ENCODE measurements at regions of chr7 and their contacts with region 1.

Region 1: GRCh38 chr7:91089382-91089963 is 174.8 kb upstream of the FZD1 start:
- DNase-seq: peak; percentile 40
- ATAC-seq: peak; percentile 67
- H3K4me3 ChIP-seq: peak overlapping the region; percentile 38; the same call in 1 of the 2 replicates
- H3K27ac ChIP-seq: no peak overlapping the region
- H3K4me1 ChIP-seq: no peaks in the 10 kb centered on the region
- H3K27me3 ChIP-seq: no peaks in the 10 kb centered on the region
- CTCF ChIP-seq: peak; percentile 88

Region 2: DNA sequence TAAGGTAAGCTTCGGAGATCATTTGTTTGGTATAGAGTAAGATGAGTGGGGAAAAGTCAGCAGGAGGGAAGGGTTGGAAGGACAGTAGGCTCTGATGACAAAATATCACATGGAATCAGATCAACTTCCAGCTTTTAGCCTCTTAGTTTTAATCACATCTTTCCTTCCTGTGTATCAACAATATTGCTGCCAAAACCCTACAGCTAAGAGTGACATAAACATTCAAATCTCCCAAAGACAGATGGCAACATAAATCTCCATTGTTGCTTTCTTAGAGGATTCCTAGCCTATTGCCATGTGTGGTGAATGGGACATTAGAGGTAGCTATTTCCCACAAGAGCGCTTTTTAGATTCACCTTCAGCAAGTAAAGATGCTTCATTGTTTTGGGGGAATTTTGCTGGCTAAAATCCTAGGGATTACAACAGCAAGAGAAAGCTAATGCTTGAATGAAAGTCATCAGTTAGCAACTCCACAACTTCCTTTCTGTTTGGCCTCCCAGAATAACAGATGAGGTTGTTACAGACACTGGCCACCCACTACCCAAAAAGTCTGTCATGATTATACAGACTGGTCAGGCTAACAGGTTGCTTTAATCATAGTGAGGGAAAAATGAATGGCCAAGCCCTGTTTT is 139.6 kb after region 1 on chr7:
- CTCF ChIA-PET with region 1: no interaction called
- POLR2A ChIA-PET with region 1: no interaction called
- intact Hi-C with region 1: loop called (anchors 5 kb)
- DNase-seq: peak; percentile 56
- ATAC-seq: peak; percentile 74
- H3K4me3 ChIP-seq: peak overlapping the region; percentile 29
- H3K27ac ChIP-seq: peak overlapping the region; percentile 84
- H3K4me1 ChIP-seq: peaks cover 21% of the 10 kb centered on the region
- H3K27me3 ChIP-seq: no peaks in the 10 kb centered on the region
- CTCF ChIP-seq: no peak

Region 3: DNA sequence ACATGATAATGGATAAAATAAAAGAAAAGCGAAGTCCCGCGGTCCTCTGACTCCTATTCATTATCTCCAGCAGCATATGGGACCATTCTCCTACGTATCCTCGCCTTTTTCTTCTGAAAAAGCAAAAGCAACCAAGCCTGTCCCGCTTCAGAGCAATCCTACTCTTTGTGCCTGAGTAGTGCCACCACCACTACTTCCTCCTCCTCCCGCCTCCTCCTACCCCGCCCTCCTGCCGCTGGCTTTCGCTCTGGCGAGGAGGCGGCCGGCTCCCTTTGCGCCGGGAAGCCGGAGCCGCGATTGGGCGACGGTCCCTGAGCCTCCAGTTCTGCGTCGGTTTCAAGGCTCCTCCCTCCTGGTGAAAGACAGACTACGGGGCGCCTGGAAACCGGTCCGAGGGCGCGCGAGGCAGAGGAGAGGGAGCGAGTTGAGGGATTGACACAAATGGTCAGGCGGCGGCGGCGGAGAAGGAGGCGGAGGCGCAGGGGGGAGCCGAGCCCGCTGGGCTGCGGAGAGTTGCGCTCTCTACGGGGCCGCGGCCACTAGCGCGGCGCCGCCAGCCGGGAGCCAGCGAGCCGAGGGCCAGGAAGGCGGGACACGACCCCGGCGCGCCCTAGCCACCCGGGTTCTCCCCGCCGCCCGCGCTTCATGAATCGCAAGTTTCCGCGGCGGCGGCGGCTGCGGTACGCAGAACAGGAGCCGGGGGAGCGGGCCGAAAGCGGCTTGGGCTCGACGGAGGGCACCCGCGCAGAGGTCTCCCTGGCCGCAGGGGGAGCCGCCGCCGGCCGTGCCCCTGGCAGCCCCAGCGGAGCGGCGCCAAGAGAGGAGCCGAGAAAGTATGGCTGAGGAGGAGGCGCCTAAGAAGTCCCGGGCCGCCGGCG is 174.8 kb after region 1 on chr7 and contains the start of gene FZD1:
- CTCF ChIA-PET with region 1: no interaction called
- POLR2A ChIA-PET with region 1: no interaction called
- intact Hi-C with region 1: loop called (anchors 1 kb)
- DNase-seq: peak; percentile 95
- ATAC-seq: peak; percentile 78
- H3K4me3 ChIP-seq: peak within 1 kb of the TSS; percentile 78
- H3K27ac ChIP-seq: no peak within 1 kb of the TSS
- H3K4me1 ChIP-seq: peaks cover 10% of the 10 kb centered on the region
- H3K27me3 ChIP-seq: no peaks in the 10 kb centered on the region
- CTCF ChIP-seq: no peak
- total RNA-seq, gene FZD1: 2.7 and 3.1 TPM in 2 replicates

Region 4: DNA sequence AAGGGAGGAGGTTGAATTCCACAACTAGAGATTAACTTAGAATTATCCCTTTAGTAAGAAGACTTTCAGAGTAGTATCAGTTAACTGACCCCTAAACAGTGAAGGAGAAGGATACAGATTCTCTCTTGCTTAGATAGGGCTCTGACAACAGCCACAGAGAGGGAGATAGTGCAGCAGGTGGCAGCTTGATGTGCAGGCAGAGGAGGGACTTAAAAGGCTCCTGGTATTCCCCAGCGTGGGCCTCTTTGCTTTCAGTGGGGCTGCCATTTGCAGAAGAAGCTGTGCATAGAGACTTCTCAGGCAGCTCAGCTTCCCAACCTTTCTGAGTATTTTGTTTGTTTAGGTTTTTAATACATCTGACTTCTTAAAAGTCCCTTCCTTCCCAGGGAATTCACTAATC is 190.7 kb after region 1 on chr7:
- CTCF ChIA-PET with region 1: no interaction called
- POLR2A ChIA-PET with region 1: no interaction called
- intact Hi-C with region 1: loop called (anchors 5 kb)
- DNase-seq: no peak
- ATAC-seq: no peak
- H3K4me3 ChIP-seq: no peak overlapping the region
- H3K27ac ChIP-seq: no peak overlapping the region
- H3K4me1 ChIP-seq: no peaks in the 10 kb centered on the region
- H3K27me3 ChIP-seq: no peaks in the 10 kb centered on the region
- CTCF ChIP-seq: no peak

Region 5: DNA sequence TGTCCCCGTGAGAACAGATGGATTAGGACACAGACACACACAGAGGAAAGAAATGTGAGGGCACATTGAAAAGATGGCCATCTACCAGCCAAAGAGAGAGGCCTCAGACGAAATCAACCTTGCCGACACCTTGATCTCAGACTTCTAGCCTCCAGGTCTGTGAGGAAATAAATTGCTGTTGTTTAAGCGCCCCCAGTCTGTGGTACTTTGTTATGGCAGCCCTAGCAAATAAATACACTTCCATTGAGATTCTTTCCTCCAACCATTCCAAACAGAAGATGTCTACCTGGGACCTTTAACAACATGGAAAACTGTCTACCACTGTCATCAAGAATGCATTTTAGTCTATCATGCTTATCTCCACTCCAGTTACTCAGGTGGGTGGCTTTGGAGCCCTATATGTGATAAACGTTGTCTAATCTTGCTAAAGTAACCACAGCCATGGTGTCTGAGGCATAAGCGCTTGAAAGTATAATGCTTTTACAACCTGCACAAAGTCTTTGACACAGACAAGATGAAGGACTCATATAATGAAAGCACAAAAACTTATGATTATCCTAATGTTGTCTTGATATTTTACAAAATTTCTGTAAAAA is 546.8 kb after region 1 on chr7:
- CTCF ChIA-PET with region 1: no interaction called
- POLR2A ChIA-PET with region 1: no interaction called
- intact Hi-C with region 1: loop called (anchors 2 kb)
- DNase-seq: peak; percentile 57
- ATAC-seq: peak; percentile 68
- H3K4me3 ChIP-seq: no peak overlapping the region
- H3K27ac ChIP-seq: no peak overlapping the region
- H3K4me1 ChIP-seq: peaks cover 10% of the 10 kb centered on the region
- H3K27me3 ChIP-seq: no peaks in the 10 kb centered on the region
- CTCF ChIP-seq: peak; percentile 71

Region 6: DNA sequence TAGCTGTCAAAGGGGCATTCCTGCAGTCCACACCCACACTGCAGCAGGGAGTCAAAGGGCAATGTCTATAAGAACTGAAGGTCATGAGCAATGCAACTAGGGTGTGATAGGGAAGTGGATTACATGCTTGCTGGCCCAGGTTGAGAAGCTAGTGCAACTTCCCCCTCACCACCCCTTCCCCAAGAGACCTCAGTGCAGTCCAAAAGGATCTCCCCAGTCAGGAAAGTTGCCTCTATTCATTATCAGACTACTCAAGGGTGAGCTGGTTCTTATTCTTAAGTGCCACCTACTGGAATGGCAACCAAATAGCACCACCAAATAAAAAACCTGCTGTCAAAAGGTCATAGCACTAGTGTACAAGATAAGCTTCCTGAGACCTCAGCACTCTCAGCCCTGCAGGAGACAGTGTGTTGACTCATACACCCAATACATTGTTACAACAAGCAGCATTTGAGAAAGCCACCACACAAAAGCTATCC is 762.8 kb after region 1 on chr7:
- CTCF ChIA-PET with region 1: no interaction called
- POLR2A ChIA-PET with region 1: no interaction called
- intact Hi-C with region 1: loop called (anchors 10 kb)
- DNase-seq: peak; percentile 64
- ATAC-seq: peak; percentile 64
- H3K4me3 ChIP-seq: no peak overlapping the region
- H3K27ac ChIP-seq: no peak overlapping the region
- H3K4me1 ChIP-seq: peaks cover 16% of the 10 kb centered on the region
- H3K27me3 ChIP-seq: no peaks in the 10 kb centered on the region
- CTCF ChIP-seq: peak; percentile 68